Right lobe of liver (tissue), 6 donors: ENCODE measurements at regions of chr9 and their contacts with region 1.

Region 1: DNA sequence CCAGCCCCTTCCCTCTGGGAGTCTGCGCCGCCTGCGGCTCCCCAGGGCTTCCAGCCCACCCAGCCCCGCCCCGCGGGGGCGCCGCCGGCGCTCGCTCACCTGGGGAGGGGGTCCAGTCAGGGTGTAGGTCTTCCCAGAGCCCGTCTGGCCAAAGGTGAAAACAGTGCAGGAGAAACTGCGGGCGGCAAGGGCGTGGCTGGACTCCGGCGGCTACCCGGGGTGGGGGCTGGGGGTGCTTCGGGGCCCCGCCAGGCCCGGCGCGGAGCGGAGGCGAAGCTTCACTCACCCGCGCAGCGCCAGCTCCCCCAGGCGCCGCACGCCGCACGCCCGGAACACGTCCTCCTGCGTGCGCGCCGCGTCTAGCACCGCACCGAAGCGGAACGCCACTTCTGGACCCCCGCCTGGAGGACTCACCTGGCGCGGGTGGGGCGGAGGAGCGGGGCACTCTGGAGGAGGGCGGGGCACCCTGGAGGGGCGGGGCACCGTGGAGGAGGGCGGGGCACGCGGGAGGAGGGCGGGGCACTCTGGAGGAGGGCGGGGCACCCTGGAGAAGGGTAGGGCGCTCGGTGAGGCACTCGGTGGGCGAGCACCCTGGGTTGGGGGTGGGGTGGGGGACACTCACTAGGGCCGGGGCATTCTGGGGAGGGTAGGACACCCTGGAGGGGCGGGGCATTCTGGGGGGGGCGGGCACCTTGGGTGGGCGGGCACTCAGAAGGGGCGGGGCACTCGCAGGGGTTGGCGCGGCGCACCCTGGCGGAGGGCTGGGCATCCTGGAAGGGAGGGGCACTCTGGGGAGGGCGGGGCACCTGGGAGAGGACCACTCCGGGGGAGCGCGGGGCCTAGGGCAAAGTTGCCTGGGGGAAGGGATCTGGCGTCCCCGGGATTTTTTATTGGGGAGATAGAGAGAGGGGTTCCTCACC is 816 bp downstream of the KIF12 start:
- DNase-seq: peak; percentile 88 to 89 (median 89)
- ATAC-seq: peak; percentile 89 to 92 (median 90)
- H3K4me3 ChIP-seq: peak overlapping the region; percentile 49 to 69 (median 57)
- H3K27ac ChIP-seq: no peak overlapping the region
- H3K4me1 ChIP-seq: peaks cover 0 to 11% (median 0%) of the 10 kb centered on the region in 4 donors
- H3K27me3 ChIP-seq: no peaks in the 10 kb centered on the region
- CTCF ChIP-seq: no peak
- POLR2A ChIP-seq: no peak

Region 2: DNA sequence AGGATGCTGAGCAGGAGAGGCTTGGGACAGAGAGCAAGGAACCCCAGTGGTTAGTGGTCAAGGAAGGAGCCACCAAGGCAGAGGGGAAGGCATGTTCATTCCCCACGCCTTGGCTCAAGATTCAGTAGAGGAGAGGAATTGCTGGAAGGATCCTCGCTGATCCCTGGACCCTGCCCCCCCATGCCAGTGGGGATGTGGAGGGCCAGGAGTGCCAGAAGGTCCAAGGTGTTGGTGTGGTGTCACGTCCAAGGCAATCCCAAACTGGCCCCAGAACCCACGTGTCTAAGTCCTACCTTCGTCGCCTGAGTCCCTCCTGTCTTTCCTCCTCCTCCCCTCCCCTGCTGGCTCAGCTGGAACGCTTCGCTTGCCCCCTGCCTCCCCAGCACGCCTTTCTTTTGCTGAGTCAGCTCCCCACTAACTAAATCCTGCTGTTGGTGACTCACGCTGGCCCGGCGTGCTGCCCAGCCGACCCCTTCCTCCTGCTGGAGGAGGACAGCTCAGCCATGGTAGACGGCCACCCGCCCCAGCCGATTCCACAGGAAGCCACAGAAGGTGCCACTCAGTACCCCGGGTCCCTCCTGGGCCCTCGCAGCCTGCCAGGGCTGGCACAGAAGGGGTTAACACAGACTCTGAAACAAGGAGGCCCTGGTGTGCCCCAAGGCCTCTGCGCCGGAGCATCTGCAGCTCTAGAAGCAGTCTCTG is 187.0 kb after region 1 on chr9:
- intact Hi-C with region 1: loop called in 1 of 2 experiments (anchors 5 kb)
- DNase-seq: peak in 2 of 3 donors; percentile 40
- ATAC-seq: no peak
- H3K4me3 ChIP-seq: no peak overlapping the region
- H3K27ac ChIP-seq: no peak overlapping the region
- H3K4me1 ChIP-seq: no peaks in the 10 kb centered on the region
- H3K27me3 ChIP-seq: no peaks in the 10 kb centered on the region
- CTCF ChIP-seq: no peak
- POLR2A ChIP-seq: no peak